HEK293 (cell line): ENCODE measurements at regions of chr19 and their contacts with region 1.

Region 1: DNA sequence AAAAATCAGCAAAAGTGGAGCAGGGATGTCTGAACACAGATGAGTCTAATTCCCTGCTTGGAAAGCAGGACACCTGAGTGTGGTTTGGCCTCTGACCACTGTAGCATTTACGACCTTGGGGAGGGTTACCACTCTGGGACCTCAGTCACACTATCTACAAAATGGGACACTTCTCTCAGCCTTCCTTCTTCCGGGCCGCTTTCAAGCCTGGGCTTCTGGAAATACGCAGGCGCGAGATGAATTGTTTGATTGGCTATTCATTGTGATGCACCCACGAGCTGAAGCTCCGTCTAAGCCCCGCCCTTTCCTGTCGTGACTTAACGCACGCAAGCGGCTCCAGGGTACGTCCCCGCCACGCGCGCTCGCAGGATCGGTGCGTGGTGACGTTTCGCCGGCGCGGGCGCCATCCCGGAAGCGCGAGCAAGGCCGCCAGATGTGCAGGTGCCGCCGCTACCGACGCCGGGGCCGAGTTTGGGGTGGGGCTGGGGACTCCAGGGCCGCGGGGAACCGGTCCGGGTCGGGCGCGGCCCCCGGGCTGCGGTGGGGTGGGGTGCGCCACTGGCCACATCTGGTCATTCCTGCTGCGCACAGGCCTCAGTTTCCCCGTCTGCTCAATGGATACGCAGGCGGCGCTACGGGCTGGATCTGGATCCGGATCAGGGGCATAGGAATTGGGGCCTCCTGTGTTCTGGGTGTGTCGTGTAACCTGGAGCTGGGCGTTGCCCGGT is at the start of gene KXD1:
- H3K4me3 ChIP-seq: peak within 1 kb of the TSS; percentile 81
- H3K27ac ChIP-seq: peak within 1 kb of the TSS; percentile 51; the same call in 1 of the 2 replicates
- H3K4me1 ChIP-seq: no peaks in the 10 kb centered on the region
- CTCF ChIP-seq: no peak

Region 2: GRCh38 chr19:18542936-18543815 is 14.5 kb before region 1 on chr19 and contains the start of gene FKBP8:
- CTCF ChIA-PET with region 1: interaction called, 6 read pairs
- POLR2A ChIA-PET with region 1: interaction called, 10 read pairs
- H3K4me3 ChIP-seq: peak within 1 kb of the TSS; percentile 78
- H3K27ac ChIP-seq: peak within 1 kb of the TSS; percentile 74
- H3K4me1 ChIP-seq: no peaks in the 10 kb centered on the region
- CTCF ChIP-seq: no peak

Region 3: GRCh38 chr19:18588611-18589379 is 31.2 kb after region 1 on chr19 and contains the start of gene REX1BD:
- CTCF ChIA-PET with region 1: interaction called, 3 read pairs
- POLR2A ChIA-PET with region 1: interaction called, 22 read pairs
- H3K4me3 ChIP-seq: peak within 1 kb of the TSS; percentile 75
- H3K27ac ChIP-seq: peak within 1 kb of the TSS; percentile 77
- H3K4me1 ChIP-seq: no peaks in the 10 kb centered on the region
- CTCF ChIP-seq: peak; percentile 98

Region 4: DNA sequence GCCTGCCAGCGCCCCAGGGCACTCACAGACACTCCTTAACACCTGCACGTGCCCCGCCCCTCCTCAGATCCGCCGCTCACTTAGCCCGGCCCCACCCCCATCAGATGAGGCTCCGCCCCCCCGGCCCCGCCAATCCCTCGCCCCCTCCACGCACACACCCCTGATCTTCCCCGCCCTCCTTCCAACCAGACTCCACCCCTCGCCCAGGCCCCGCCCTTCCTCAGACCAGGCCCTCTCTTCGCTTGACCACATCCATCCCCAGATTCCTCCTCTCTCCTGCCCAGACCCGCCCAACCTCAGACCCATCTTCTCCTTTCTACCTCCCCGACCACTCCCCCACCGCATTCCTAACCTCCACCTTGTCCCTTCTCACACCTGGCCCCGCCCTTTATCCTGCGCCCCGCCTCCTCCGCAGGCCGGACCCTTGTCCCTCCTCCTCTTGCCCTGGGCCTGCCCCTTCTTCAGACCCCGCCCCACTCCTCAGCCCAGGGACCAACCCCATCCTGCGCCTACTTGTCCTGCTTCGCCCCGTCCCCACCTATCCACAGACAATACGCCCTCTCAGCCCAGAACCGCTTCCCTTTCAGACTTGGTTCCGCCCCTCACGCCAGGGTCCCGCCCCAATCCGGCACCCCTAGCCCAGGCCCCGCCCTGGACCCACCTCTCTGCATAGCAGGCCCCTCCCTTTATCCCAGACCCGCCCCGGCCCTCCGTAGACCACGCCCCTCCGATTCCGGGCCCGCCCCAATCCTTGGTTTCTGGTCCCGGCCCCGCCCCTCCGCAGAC is 78.7 kb after region 1 on chr19:
- CTCF ChIA-PET with region 1: no interaction called
- POLR2A ChIA-PET with region 1: no interaction called
- H3K4me3 ChIP-seq: peak overlapping the region; percentile 86
- H3K27ac ChIP-seq: no peak overlapping the region
- H3K4me1 ChIP-seq: peaks cover 8% of the 10 kb centered on the region; the same call in 1 of the 2 replicates
- CTCF ChIP-seq: no peak